PC-3 (cell line): ENCODE measurements at regions of chr10 and their contacts with region 1.

Region 1: GRCh38 chr10:79929409-79929904 is 19.4 kb downstream of the SFTPD start:
- DNase-seq: peak; percentile 95
- ATAC-seq: peak; percentile 85
- H3K4me3 ChIP-seq: 0 out of 2 replicates have a peak overlapping the region, but pooled peaks have one; percentile 7
- H3K27ac ChIP-seq: no peak overlapping the region
- H3K4me1 ChIP-seq: peaks cover 26% of the 10 kb centered on the region
- H3K27me3 ChIP-seq: peaks cover 19% of the 10 kb centered on the region
- CTCF ChIP-seq: peak; percentile 100

Region 2: DNA sequence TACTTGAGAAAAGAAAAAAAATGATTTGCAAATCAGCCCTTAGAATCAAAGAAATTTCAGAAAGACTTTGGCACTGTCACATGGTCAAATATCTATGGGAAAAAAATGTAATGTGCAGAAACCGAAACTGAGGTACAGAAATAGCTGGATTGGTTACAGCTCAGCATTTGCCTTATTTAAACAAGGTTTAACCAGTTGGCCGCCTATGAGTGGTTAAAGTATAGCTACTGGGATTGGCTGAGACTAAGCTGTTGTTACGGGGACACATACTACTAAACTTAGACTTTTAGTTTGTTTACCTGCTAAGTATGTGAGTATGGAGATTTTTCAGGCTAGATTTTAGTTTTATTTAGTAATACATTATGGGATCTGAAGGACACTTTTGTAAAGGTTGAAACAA is 19.1 kb before region 1 on chr10:
- CTCF ChIA-PET with region 1: interaction called, 6 read pairs
- POLR2A ChIA-PET with region 1: interaction called, 3 read pairs
- intact Hi-C with region 1: loop called (anchors 2 kb)
- DNase-seq: no peak
- ATAC-seq: no peak
- H3K4me3 ChIP-seq: no peak overlapping the region
- H3K27ac ChIP-seq: no peak overlapping the region
- H3K4me1 ChIP-seq: peaks cover 5% of the 10 kb centered on the region
- H3K27me3 ChIP-seq: no peaks in the 10 kb centered on the region
- CTCF ChIP-seq: no peak

Region 3: GRCh38 chr10:79981450-79982361 is 52.2 kb after region 1 on chr10:
- CTCF ChIA-PET with region 1: no interaction called
- POLR2A ChIA-PET with region 1: no interaction called
- intact Hi-C with region 1: loop called (anchors 1 kb)
- DNase-seq: peak; percentile 97
- ATAC-seq: peak; percentile 83
- H3K4me3 ChIP-seq: peak overlapping the region; percentile 74
- H3K27ac ChIP-seq: no peak overlapping the region
- H3K4me1 ChIP-seq: peaks cover 32% of the 10 kb centered on the region
- H3K27me3 ChIP-seq: no peaks in the 10 kb centered on the region
- CTCF ChIP-seq: peak; percentile 46